ENCODE measurements at regions of chr1 and their contacts with region 1.

Region 1: GRCh38 chr1:218345673-218346390 is 696 bp downstream of the TGFB2 start:
- DNase-seq: peak; percentile 89
- H3K4me3 ChIP-seq: peak overlapping the region; percentile 80
- H3K27ac ChIP-seq: no peak overlapping the region
- H3K4me1 ChIP-seq: peaks cover 7% of the 10 kb centered on the region
- H3K27me3 ChIP-seq: no peaks in the 10 kb centered on the region

Region 2: GRCh38 chr1:218557731-218558130 is 211.9 kb after region 1 on chr1:
- in situ Hi-C with region 1: loop called (anchors 10 kb)
- DNase-seq: no peak
- H3K4me3 ChIP-seq: no peak overlapping the region
- H3K27ac ChIP-seq: no peak overlapping the region
- H3K4me1 ChIP-seq: no peaks in the 10 kb centered on the region
- H3K27me3 ChIP-seq: no peaks in the 10 kb centered on the region

Region 3: DNA sequence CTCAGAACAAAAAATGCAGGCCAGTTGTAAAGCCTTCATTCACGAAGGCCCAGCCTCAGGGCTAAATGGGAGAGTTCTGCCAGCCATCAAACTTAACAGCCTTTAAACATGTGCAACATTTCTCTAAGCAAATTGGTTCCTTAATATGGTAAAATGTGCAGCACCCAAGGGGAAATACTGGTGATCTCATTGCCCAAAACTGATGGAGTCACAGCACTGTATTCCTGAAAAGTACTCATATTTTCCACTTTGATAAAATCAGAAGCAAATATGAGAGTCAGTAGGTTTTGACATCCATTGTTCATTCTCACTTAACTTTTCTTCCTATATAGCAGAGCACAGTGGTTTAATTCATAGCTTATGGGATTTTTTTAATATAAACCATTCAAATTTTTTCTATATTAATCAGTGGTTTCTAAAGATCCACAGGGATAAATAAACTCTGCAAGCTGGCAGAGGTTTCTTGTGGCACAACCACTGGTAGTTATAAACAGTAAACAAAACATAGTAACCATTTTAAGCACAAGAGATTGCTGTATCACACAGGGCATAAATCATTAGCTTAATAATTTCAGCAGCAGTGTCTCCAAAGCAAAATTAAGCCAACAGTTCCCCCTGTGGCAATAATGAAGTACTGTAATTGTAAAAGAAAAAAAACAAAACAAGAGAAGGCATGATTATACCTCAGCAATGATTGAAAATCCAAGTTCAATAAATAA is 721.0 kb after region 1 on chr1:
- in situ Hi-C with region 1: loop called (anchors 25 kb)
- DNase-seq: peak; percentile 78
- H3K4me3 ChIP-seq: no peak overlapping the region
- H3K27ac ChIP-seq: peak overlapping the region; percentile 36
- H3K4me1 ChIP-seq: peaks cover 14% of the 10 kb centered on the region
- H3K27me3 ChIP-seq: no peaks in the 10 kb centered on the region

Region 4: DNA sequence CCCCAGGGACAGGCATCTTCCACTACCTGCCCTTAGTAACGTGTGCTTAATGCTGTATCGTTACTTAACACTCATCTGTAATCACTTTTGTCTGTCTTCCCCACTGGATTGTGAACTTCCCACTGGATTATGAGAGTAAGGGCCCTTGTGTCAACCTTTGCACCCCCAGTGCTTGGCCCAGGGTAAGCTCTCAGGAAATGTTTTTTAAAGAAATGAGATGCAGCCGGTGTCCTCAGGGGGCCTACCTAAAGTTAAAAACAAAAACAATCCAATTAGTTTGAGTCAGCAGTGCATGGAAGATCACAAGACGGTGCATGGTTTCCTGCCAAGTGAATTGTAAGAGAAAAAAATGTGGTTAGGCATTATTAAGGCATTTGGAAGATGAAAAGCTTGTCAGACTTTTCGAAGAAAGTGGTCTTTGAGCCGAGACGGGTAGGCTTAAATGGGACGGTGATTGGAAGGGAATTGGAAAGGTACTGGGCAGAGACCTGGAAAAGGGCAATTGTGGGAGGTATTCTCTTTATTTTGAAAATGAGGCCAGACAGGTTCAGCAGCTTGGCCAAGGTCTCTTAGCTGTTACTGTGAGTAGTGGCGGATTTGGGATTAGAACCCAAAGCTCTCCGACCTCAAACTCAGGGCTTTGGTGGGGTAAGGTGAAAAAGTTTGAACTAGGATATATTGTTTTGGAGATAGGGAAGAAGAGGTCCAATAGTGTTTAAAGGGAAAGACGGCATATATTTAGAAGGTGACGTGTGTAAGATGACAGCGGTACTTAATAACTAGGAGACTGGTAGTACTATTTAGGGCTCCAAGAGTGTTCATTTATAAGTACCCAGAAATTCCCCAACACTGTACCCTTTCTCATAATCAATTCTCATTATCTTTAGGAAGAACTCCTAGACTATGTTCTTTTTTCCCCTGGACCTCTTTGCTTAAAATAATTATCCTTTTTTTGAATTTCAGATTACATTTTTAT is 829.0 kb after region 1 on chr1:
- in situ Hi-C with region 1: loop called (anchors 25 kb)
- DNase-seq: peak; percentile 89
- H3K4me3 ChIP-seq: peak overlapping the region; percentile 86
- H3K27ac ChIP-seq: peak overlapping the region; percentile 77
- H3K4me1 ChIP-seq: peaks cover 21% of the 10 kb centered on the region
- H3K27me3 ChIP-seq: no peaks in the 10 kb centered on the region

Region 5: DNA sequence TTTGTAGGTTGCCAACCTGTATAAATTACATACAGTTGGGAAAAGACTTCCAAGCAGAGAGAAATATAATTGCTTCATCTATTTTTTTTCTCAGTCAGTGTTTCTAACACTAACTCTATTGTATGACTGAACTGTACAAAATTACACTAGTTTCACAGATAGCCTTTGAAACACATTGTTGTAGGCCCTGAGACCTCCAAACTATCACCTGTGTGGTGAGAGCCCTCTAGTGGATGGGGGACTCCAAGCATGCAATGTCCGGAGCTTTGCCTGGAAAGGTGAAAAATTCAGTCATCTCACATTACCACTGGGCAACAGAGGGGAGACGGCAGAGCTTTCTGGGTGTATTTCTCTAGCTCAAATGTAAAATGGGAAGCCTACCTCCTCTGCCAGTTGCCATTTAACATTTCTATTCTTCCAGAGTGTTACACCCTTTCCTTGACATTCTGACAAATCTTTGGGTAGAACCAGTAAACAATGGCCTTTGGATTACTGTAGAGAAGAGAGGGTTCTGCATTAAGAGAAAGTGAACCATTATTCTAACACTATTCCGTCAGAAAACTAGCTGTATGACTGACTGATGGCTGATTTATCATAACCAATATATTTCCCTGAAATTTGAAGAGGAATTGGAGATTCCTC is 1040.1 kb after region 1 on chr1:
- in situ Hi-C with region 1: loop called (anchors 25 kb)
- DNase-seq: peak; percentile 69
- H3K4me3 ChIP-seq: no peak overlapping the region
- H3K27ac ChIP-seq: no peak overlapping the region
- H3K4me1 ChIP-seq: no peaks in the 10 kb centered on the region
- H3K27me3 ChIP-seq: no peaks in the 10 kb centered on the region

Region 6: GRCh38 chr1:219812491-219813203 is 1466.8 kb after region 1 on chr1:
- in situ Hi-C with region 1: loop called (anchors 25 kb)
- DNase-seq: peak; percentile 86
- H3K4me3 ChIP-seq: no peak overlapping the region
- H3K27ac ChIP-seq: no peak overlapping the region
- H3K4me1 ChIP-seq: peaks cover 3% of the 10 kb centered on the region; the same call in 1 of the 2 replicates
- H3K27me3 ChIP-seq: peaks cover 66% of the 10 kb centered on the region